SK-N-SH (cell line): ENCODE measurements at regions of chr4 and their contacts with region 1.

Region 1: DNA sequence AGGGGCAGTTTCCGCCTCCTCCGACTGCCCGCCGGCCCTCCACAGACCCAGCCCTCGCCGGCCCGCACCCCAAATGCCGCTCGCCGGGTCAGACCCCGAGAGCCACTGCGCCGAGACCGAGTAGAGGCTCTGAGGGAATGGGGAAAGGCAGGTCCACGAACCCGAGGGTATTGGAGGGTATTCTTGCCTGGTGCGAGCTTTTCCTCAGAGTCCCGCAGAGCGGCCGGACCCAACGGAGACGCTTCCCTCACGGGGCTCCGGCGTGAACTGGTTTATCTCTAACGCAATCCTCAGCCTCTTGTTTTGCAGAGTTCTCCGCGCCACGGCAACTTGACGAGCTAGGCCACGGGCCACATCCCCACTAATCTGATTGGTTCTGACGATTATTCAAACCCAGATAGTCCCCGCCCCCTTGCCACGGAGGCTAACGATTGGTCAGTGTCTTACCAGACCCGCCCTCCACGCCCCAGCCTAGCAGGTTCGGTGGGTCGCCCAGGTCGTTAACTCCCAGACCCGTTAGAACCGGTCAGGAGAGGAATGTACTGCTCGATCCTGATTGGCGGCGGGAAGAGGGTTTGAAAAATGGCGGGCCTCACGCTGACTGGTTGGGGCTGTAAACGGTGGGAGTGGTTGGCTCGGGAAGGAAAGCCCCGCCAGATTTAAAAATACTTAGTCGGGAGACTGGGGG is at the start of gene HMGB2:
- DNase-seq: peak; percentile 97
- H3K4me3 ChIP-seq: peak within 1 kb of the TSS; percentile 96 to 99
- H3K27ac ChIP-seq: peak within 1 kb of the TSS; percentile 96 to 98
- H3K4me1 ChIP-seq: peaks cover 19 to 24% of the 10 kb centered on the region in 2 experiments
- H3K27me3 ChIP-seq: no peaks in the 10 kb centered on the region
- CTCF ChIP-seq: no peak
- EP300 ChIP-seq: no peak; a peak in 1 of 4 replicates
- RAD21 ChIP-seq: no peak
- polyA plus RNA-seq, gene HMGB2: 123 and 130 TPM in 2 replicates

Region 2: GRCh38 chr4:173318648-173319211 is 15.5 kb before region 1 on chr4:
- CTCF ChIA-PET with region 1: interaction called, 37 read pairs
- POLR2A ChIA-PET with region 1: interaction called, 8 read pairs
- DNase-seq: peak; percentile 18
- H3K4me3 ChIP-seq: no peak overlapping the region
- H3K27ac ChIP-seq: peak overlapping the region in 1 of 2 experiments; percentile 37; a peak in 3 of 4 replicates
- H3K4me1 ChIP-seq: peaks cover 0 to 21% of the 10 kb centered on the region in 2 experiments; a peak in 3 of 4 replicates
- H3K27me3 ChIP-seq: no peaks in the 10 kb centered on the region
- CTCF ChIP-seq: peak; percentile 50
- EP300 ChIP-seq: no peak
- RAD21 ChIP-seq: peak; percentile 68

Region 3: DNA sequence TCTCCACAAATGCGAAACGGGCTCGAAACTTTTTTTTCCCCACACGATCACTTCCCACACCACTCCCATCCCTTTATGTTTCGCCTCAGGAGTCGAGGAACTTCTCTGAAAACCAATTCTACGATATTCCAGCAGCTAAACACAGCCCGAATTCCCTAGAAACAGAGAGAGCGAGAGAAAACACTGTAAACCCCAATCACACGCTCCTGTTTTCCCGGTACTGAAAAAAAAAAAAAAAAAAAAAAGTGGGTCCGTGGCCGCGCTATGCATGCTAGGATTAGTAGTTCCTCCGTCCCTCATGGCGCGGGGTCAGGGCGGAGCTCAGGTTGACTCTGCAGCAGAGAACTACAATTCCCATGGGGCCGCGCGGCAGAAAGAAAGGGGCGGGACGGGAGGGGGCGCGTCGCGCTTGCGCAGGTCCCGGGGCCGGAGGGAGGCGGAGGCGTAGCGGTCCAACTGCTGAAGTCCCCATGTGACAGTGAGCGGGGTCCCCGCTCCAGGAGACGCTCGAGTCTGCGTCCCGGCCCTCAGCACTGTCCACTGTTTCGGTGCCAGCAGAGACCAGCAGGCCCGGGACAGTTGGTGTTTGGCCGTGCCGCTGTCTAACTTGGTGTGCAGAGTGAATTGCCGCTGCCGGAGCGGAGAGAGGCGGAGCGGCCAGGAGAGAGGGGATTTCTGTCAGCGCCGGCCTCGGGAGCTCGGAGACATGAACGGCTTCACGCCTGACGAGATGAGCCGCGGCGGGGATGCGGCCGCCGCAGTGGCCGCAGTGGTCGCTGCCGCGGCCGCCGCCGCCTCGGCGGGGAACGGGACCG is 36.5 kb after region 1 on chr4 and contains the start of gene SAP30:
- CTCF ChIA-PET with region 1: interaction called, 7 read pairs
- POLR2A ChIA-PET with region 1: interaction called, 69 read pairs
- DNase-seq: peak; percentile 98
- H3K4me3 ChIP-seq: peak within 1 kb of the TSS; percentile 92 to 94
- H3K27ac ChIP-seq: peak within 1 kb of the TSS; percentile 91 to 94
- H3K4me1 ChIP-seq: peaks cover 6 to 18% of the 10 kb centered on the region in 2 experiments
- H3K27me3 ChIP-seq: no peaks in the 10 kb centered on the region
- CTCF ChIP-seq: no peak
- EP300 ChIP-seq: no peak
- RAD21 ChIP-seq: no peak
- polyA plus RNA-seq, gene SAP30: 16.6 and 19.0 TPM in 2 replicates

Region 4: GRCh38 chr4:173488074-173488473 is 153.8 kb after region 1 on chr4:
- CTCF ChIA-PET with region 1: no interaction called
- POLR2A ChIA-PET with region 1: interaction called, 11 read pairs
- DNase-seq: no peak
- H3K4me3 ChIP-seq: no peak overlapping the region
- H3K27ac ChIP-seq: peak overlapping the region in 1 of 2 experiments; percentile 79; a peak in 2 of 4 replicates
- H3K4me1 ChIP-seq: peaks cover 39% of the 10 kb centered on the region in 2 experiments; a peak in 3 of 4 replicates
- H3K27me3 ChIP-seq: no peaks in the 10 kb centered on the region
- CTCF ChIP-seq: no peak
- EP300 ChIP-seq: no peak
- RAD21 ChIP-seq: no peak